Activated CD8-positive, alpha-beta T cell treated with anti-CD3 and anti-CD28 coated beads, Interleukin-2, amount 10 ng/mL, durations not matched to agents 7 days and 5 days (primary cell): ENCODE measurements at regions of chr4 and their contacts with region 1.

Region 1: GRCh38 chr4:82851885-82852750 is 38.8 kb downstream of the SEC31A start:
- DNase-seq: peak; percentile 34
- ATAC-seq: no peak
- H3K4me3 Mint-ChIP-seq: no peak overlapping the region
- H3K27ac Mint-ChIP-seq: no peak overlapping the region
- H3K4me1 Mint-ChIP-seq: peaks cover 8% of the 10 kb centered on the region
- H3K27me3 Mint-ChIP-seq: no peaks in the 10 kb centered on the region

Region 2: GRCh38 chr4:82865592-82865991 is 13.5 kb after region 1 on chr4:
- CTCF ChIA-PET with region 1: interaction called, 27 read pairs
- POLR2A ChIA-PET with region 1: no interaction called
- DNase-seq: peak; percentile 49
- ATAC-seq: peak; percentile 69
- H3K4me3 Mint-ChIP-seq: peak overlapping the region; percentile 62
- H3K27ac Mint-ChIP-seq: peak overlapping the region; percentile 85
- H3K4me1 Mint-ChIP-seq: peaks cover 40% of the 10 kb centered on the region
- H3K27me3 Mint-ChIP-seq: no peaks in the 10 kb centered on the region

Region 3: GRCh38 chr4:82890901-82891706 is 39.0 kb after region 1 on chr4 and contains the start of gene SEC31A:
- CTCF ChIA-PET with region 1: interaction called, 26 read pairs
- POLR2A ChIA-PET with region 1: interaction called, 4 read pairs
- DNase-seq: peak; percentile 98
- ATAC-seq: peak; percentile 93
- H3K4me3 Mint-ChIP-seq: peak within 1 kb of the TSS; percentile 93
- H3K27ac Mint-ChIP-seq: peak within 1 kb of the TSS; percentile 97
- H3K4me1 Mint-ChIP-seq: peaks cover 47% of the 10 kb centered on the region
- H3K27me3 Mint-ChIP-seq: no peaks in the 10 kb centered on the region
- total RNA-seq, gene SEC31A: 111 to 113 TPM

Region 4: GRCh38 chr4:82900331-82901128 is 48.4 kb after region 1 on chr4 and contains the start of gene THAP9:
- CTCF ChIA-PET with region 1: interaction called, 48 read pairs
- POLR2A ChIA-PET with region 1: interaction called, 10 read pairs
- DNase-seq: peak; percentile 99
- ATAC-seq: peak; percentile 91
- H3K4me3 Mint-ChIP-seq: no peak within 1 kb of the TSS
- H3K27ac Mint-ChIP-seq: no peak within 1 kb of the TSS
- H3K4me1 Mint-ChIP-seq: peaks cover 45% of the 10 kb centered on the region
- H3K27me3 Mint-ChIP-seq: no peaks in the 10 kb centered on the region
- total RNA-seq, gene THAP9: 3.1 to 3.3 TPM

Region 5: GRCh38 chr4:83034630-83035494 is 182.7 kb after region 1 on chr4 and contains the start of gene COPS4:
- CTCF ChIA-PET with region 1: interaction called, 12 read pairs
- POLR2A ChIA-PET with region 1: no interaction called
- DNase-seq: peak; percentile 98
- ATAC-seq: peak; percentile 99
- H3K4me3 Mint-ChIP-seq: peak within 1 kb of the TSS; percentile 91
- H3K27ac Mint-ChIP-seq: peak within 1 kb of the TSS; percentile 98
- H3K4me1 Mint-ChIP-seq: peaks cover 24% of the 10 kb centered on the region
- H3K27me3 Mint-ChIP-seq: peaks cover 5% of the 10 kb centered on the region
- total RNA-seq, gene COPS4: 33.7 to 34.6 TPM

Region 6: GRCh38 chr4:83046693-83047473 is 194.8 kb after region 1 on chr4:
- CTCF ChIA-PET with region 1: no interaction called
- POLR2A ChIA-PET with region 1: no interaction called
- DNase-seq: no peak
- ATAC-seq: no peak
- H3K4me3 Mint-ChIP-seq: no peak overlapping the region
- H3K27ac Mint-ChIP-seq: no peak overlapping the region
- H3K4me1 Mint-ChIP-seq: peaks cover 9% of the 10 kb centered on the region
- H3K27me3 Mint-ChIP-seq: no peaks in the 10 kb centered on the region